GM12878 (cell line): ENCODE measurements at regions of chr9 and their contacts with region 1.

Region 1: GRCh38 chr9:32251539-32251938 is 132.9 kb upstream of the ACO1 start:
- DNase-seq: peak; percentile 13
- ATAC-seq: peak; percentile 91
- H3K4me3 ChIP-seq: no peak overlapping the region
- H3K27ac ChIP-seq: no peak overlapping the region
- H3K4me1 ChIP-seq: no peaks in the 10 kb centered on the region
- H3K27me3 ChIP-seq: no peaks in the 10 kb centered on the region
- CTCF ChIP-seq: peak; percentile 71 to 76 (median 73)
- EP300 ChIP-seq: no peak
- POLR2A ChIP-seq: no peak
- RAD21 ChIP-seq: peak; percentile 83

Region 2: DNA sequence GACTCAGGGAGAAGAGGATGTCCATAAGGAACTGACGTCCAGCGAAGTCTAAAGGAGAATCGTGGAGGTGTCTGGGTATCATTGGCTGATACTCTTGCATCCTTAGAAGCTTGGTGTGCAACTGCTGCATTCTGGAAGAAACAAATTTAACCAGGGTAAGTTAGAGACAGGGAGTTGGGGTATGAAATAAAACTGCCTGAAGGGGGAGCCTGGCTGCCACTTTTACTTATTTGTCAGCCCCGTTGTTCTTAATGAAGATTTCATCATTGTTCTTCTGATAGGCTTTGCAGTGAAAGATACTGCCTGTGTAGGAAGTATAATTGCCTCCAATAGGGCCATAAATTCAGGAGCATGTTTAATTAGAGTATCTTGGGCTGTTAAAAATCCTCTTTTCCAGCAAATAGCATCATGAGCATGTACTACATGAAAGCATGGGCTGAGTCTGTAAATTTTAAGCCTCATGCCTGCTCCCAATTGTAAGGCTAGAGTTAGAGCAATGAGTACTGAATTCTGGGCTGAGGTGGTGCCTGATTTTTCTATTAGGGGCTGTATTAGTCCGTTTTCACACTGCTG is 1131.6 kb before region 1 on chr9:
- CTCF ChIA-PET with region 1: interaction called, 4 read pairs
- POLR2A ChIA-PET with region 1: no interaction called
- RAD21 ChIA-PET with region 1: no interaction called
- SMC1A ChIA-PET with region 1: no interaction called
- in situ Hi-C with region 1: loop called (anchors 10 kb)
- intact Hi-C with region 1: loop called (anchors 5 kb)
- DNase-seq: no peak
- ATAC-seq: peak; percentile 78
- H3K4me3 ChIP-seq: no peak overlapping the region
- H3K27ac ChIP-seq: no peak overlapping the region
- H3K4me1 ChIP-seq: no peaks in the 10 kb centered on the region
- H3K27me3 ChIP-seq: no peaks in the 10 kb centered on the region
- CTCF ChIP-seq: peak; percentile 52 to 70 (median 52)
- EP300 ChIP-seq: no peak
- POLR2A ChIP-seq: no peak
- RAD21 ChIP-seq: peak; percentile 81

Region 3: GRCh38 chr9:31799953-31800609 is 451.5 kb before region 1 on chr9:
- CTCF ChIA-PET with region 1: no interaction called
- POLR2A ChIA-PET with region 1: no interaction called
- RAD21 ChIA-PET with region 1: interaction called, 3 read pairs
- SMC1A ChIA-PET with region 1: no interaction called
- in situ Hi-C with region 1: no loop called
- intact Hi-C with region 1: loop called (anchors 10 kb)
- DNase-seq: peak; percentile 4
- ATAC-seq: no peak
- H3K4me3 ChIP-seq: no peak overlapping the region
- H3K27ac ChIP-seq: no peak overlapping the region
- H3K4me1 ChIP-seq: no peaks in the 10 kb centered on the region
- H3K27me3 ChIP-seq: no peaks in the 10 kb centered on the region
- CTCF ChIP-seq: peak; percentile 25 to 61 (median 44); a peak in 5 of 6 replicates
- EP300 ChIP-seq: no peak
- POLR2A ChIP-seq: no peak
- RAD21 ChIP-seq: peak; percentile 84

Region 4: DNA sequence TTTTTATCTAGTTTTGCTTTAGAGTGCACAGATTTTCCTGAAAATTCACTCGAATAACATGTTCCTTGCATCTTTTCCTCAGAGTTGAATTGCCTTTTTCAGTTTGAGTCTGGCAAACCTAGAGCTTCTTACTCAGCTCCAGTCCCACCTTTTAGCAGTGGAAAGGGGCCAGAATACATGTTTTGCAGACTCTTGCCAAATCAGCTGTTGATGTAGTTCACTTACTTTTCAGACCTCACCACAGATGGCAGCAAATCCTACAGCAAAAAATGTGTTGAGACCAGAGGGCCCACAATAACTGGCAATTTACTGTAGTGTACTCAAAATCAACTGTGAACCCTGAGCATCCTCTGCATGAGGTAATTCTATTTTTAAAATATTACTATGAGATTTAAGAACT is 412.3 kb before region 1 on chr9:
- CTCF ChIA-PET with region 1: no interaction called
- POLR2A ChIA-PET with region 1: no interaction called
- RAD21 ChIA-PET with region 1: no interaction called
- SMC1A ChIA-PET with region 1: no interaction called
- in situ Hi-C with region 1: no loop called
- intact Hi-C with region 1: loop called (anchors 10 kb)
- DNase-seq: no peak
- ATAC-seq: no peak
- H3K4me3 ChIP-seq: no peak overlapping the region
- H3K27ac ChIP-seq: no peak overlapping the region
- H3K4me1 ChIP-seq: no peaks in the 10 kb centered on the region
- H3K27me3 ChIP-seq: no peaks in the 10 kb centered on the region
- CTCF ChIP-seq: no peak; a peak in 1 of 6 replicates
- EP300 ChIP-seq: no peak
- POLR2A ChIP-seq: no peak
- RAD21 ChIP-seq: no peak

Region 5: DNA sequence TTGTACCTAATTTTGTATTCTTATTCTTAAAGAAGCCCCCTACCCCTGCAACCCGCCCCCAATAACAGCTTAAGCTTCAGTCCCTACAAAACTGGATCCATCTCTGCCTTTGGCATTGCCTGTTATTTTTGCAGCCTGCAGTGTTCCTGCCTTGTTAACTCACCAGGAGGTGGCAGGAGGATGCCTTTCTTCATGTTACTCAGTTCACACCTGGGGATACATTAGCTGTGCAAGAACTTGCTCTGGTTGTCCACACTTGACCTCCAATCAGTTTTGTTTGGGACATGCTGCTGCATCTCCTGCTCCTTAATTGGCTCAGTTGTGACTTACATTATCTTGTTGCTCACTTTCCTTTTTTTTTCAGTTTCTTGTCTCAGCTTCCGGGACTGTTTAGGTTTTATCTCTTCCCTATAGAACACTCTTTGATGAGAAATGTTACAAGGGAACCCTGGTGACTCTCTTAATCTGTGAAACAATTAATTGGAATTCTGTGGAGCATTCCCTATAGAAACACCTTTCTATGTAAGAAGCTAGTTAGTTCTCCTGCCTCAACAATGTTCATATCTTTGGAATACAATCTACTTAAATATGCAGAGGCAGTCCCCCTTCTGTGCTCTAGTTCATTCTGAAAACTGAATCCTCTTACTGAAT is 334.8 kb before region 1 on chr9:
- CTCF ChIA-PET with region 1: interaction called, 4 read pairs
- POLR2A ChIA-PET with region 1: no interaction called
- RAD21 ChIA-PET with region 1: interaction called, 4 read pairs
- SMC1A ChIA-PET with region 1: interaction called, 4 read pairs
- in situ Hi-C with region 1: no loop called
- intact Hi-C with region 1: loop called (anchors 2 kb)
- DNase-seq: no peak
- ATAC-seq: no peak
- H3K4me3 ChIP-seq: no peak overlapping the region
- H3K27ac ChIP-seq: no peak overlapping the region
- H3K4me1 ChIP-seq: no peaks in the 10 kb centered on the region
- H3K27me3 ChIP-seq: no peaks in the 10 kb centered on the region
- CTCF ChIP-seq: peak in 2 of 3 experiments; percentile 8 to 32; a peak in 2 of 6 replicates
- EP300 ChIP-seq: no peak
- POLR2A ChIP-seq: no peak
- RAD21 ChIP-seq: peak; percentile 40

Region 6: GRCh38 chr9:31996322-31996721 is 255.2 kb before region 1 on chr9:
- CTCF ChIA-PET with region 1: no interaction called
- POLR2A ChIA-PET with region 1: no interaction called
- RAD21 ChIA-PET with region 1: no interaction called
- SMC1A ChIA-PET with region 1: no interaction called
- in situ Hi-C with region 1: no loop called
- intact Hi-C with region 1: loop called (anchors 10 kb)
- DNase-seq: no peak
- ATAC-seq: no peak
- H3K4me3 ChIP-seq: no peak overlapping the region
- H3K27ac ChIP-seq: no peak overlapping the region
- H3K4me1 ChIP-seq: no peaks in the 10 kb centered on the region
- H3K27me3 ChIP-seq: no peaks in the 10 kb centered on the region
- CTCF ChIP-seq: no peak
- EP300 ChIP-seq: no peak
- POLR2A ChIP-seq: no peak
- RAD21 ChIP-seq: no peak

Region 7: GRCh38 chr9:32142074-32142473 is 109.5 kb before region 1 on chr9:
- CTCF ChIA-PET with region 1: interaction called, 10 read pairs
- POLR2A ChIA-PET with region 1: no interaction called
- RAD21 ChIA-PET with region 1: interaction called, 3 read pairs
- SMC1A ChIA-PET with region 1: interaction called, 10 read pairs
- in situ Hi-C with region 1: loop called (anchors 5 kb)
- intact Hi-C with region 1: loop called (anchors 1 kb)
- DNase-seq: no peak
- ATAC-seq: no peak
- H3K4me3 ChIP-seq: no peak overlapping the region
- H3K27ac ChIP-seq: no peak overlapping the region
- H3K4me1 ChIP-seq: no peaks in the 10 kb centered on the region
- H3K27me3 ChIP-seq: no peaks in the 10 kb centered on the region
- CTCF ChIP-seq: no peak
- EP300 ChIP-seq: no peak
- POLR2A ChIP-seq: no peak
- RAD21 ChIP-seq: no peak